GM13977 (cell line): ENCODE measurements at regions of chr21 and their contacts with region 1.

Region 1: GRCh38 chr21:31180256-31181081 is 142.2 kb upstream of the KRTAP19-8 start:
- DNase-seq: peak; percentile 49
- CTCF ChIP-seq: peak; percentile 47

Region 2: DNA sequence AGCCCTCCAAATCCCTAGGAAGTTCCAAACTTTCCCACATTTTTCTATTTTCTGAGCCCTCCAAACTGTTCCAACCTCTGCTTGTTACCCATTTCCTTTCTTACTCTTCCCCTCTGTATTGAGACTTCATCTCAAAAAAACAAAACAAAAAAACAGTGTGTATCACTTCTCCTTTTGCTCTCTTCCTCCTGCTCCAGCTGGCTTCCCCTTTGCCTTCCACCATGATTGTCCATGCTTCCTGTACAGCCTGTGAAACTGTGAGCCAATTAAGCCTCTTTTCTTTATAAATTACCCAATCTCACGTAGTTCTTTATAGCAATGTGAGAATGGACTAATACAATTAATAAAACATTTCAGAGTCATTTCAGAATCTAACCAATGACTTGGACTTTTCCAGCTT is 72.6 kb before region 1 on chr21:
- in situ Hi-C with region 1: loop called (anchors 10 kb)
- DNase-seq: no peak
- CTCF ChIP-seq: no peak

Region 3: GRCh38 chr21:31326522-31327242 is 146.2 kb after region 1 on chr21:
- in situ Hi-C with region 1: no loop called
- DNase-seq: peak; percentile 42
- CTCF ChIP-seq: no peak

Region 4: DNA sequence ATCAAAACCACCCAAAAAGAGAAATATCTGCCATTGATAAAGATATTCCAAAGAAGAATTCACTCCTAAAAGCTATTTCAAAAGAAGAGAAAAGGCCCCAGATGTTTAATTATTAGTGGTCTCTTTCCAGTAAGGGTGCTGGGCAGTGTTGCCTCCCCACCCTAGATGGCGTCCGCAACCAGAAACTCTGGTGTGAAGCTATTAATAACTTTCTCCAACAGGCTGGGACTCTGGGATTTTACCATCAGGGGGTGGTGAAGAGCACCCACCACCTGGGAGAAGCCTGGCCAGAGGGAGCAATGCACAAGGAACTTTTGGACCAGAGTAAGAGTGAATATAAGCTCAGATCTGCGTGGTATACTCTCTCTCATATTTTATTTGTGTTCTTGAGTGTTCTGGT is 279.0 kb after region 1 on chr21:
- in situ Hi-C with region 1: no loop called
- DNase-seq: no peak
- CTCF ChIP-seq: no peak